H1 (cell line): ENCODE measurements at regions of chr16 and their contacts with region 1.

Region 1: GRCh38 chr16:68737046-68737729 is at the start of gene CDH1:
- DNase-seq: peak; percentile 86 to 97
- H3K4me3 ChIP-seq: peak within 1 kb of the TSS; percentile 60 to 90 (median 84)
- H3K27ac ChIP-seq: peak within 1 kb of the TSS; percentile 50
- H3K4me1 ChIP-seq: peaks cover 0 to 7% (median 2%) of the 10 kb centered on the region in 4 experiments; a peak in 3 of 7 replicates
- H3K27me3 ChIP-seq: no peaks in the 10 kb centered on the region
- CTCF ChIP-seq: no peak
- EP300 ChIP-seq: no peak
- POLR2A ChIP-seq: peak; percentile 98 to 99
- RAD21 ChIP-seq: 0 out of 4 replicates have a peak, but pooled peaks of 1 of the 2 experiments have one; percentile 2
- total RNA-seq, gene CDH1: 265 and 319 TPM in 2 replicates

Region 2: DNA sequence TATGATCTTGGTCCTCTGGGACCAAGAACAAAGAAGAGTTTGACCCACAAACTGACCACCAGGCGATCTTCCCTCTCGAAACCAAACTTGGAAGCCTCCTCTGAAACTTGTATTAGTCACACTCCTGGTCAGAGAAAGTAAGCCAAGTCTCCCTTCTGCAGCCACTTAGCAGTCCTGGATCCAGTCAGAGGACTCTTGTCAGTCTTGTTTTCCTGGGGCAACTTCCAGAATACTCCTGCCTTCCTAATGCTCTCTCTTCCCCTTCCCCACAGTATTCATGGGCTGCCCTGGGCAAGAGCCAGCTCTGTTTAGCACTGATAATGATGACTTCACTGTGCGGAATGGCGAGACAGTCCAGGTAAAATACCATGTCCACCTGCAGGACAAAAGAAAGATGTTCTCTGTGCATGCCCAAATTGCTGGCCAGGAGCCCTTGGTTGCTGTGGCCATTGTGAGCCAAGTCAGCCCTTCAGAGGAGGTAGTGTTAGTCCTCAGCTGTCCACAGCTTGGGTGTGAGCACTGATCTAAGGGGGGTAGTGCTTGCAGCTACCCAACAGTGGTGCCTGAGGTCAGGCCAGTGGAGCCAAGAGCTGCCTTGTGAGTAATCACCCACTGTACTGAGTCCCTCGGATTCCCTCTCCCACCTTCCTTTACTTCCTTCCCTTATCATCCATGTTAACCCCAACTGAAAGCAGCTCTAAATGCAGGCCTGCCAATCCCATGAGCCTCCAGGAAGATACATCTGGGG is 60.9 kb before region 1 on chr16:
- CTCF ChIA-PET with region 1: no interaction called
- POLR2A ChIA-PET with region 1: no interaction called
- DNase-seq: no peak
- H3K4me3 ChIP-seq: no peak overlapping the region
- H3K27ac ChIP-seq: no peak overlapping the region
- H3K4me1 ChIP-seq: no peaks in the 10 kb centered on the region
- H3K27me3 ChIP-seq: no peaks in the 10 kb centered on the region
- CTCF ChIP-seq: no peak
- EP300 ChIP-seq: no peak
- POLR2A ChIP-seq: no peak
- RAD21 ChIP-seq: no peak

Region 3: GRCh38 chr16:68752602-68753001 is 15.4 kb after region 1 on chr16:
- CTCF ChIA-PET with region 1: interaction called, 4 read pairs
- POLR2A ChIA-PET with region 1: interaction called, 21 read pairs
- DNase-seq: no peak
- H3K4me3 ChIP-seq: no peak overlapping the region
- H3K27ac ChIP-seq: no peak overlapping the region
- H3K4me1 ChIP-seq: peaks cover 0 to 8% (median 4%) of the 10 kb centered on the region in 4 experiments; a peak in 3 of 7 replicates
- H3K27me3 ChIP-seq: no peaks in the 10 kb centered on the region
- CTCF ChIP-seq: no peak
- EP300 ChIP-seq: no peak
- POLR2A ChIP-seq: no peak
- RAD21 ChIP-seq: no peak